Prostate gland (tissue), 2 donors: ENCODE measurements at regions of chr7 and their contacts with region 1.

Region 1: DNA sequence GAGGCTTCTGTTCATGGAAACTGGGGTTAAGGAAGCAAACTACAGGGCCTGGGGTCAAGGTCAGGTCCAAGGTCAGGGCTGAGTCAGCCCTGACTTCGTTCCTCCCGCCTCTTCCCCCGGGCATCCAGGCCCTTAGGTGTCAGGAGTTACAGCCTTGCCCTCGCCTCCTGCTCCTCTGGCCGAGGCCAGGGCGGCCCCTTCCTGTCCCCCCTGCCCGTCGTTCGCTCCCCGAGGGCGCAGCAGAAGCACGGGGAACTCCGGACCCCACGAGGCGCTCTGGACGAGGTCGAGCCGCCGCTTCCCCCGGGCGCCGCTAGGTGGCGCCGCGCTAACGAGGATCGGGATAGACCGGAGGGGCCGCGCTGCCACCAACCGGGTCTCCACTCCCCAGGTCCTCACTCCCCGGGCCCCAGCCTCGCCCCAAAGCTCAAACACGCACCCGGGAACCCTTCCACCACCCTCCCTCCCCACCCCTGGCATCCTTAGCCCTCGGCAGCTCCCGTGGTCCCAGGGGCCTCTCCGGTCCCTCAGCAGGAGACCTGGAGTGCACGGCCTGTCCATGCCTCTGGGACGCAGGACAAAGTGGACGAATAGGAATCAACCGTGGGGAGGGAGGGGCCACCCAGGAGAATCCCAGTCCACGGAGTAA is 59.2 kb upstream of the MYL10 start:
- DNase-seq: peak; percentile 58
- H3K4me3 ChIP-seq: no peak overlapping the region
- H3K27ac ChIP-seq: no peak overlapping the region
- H3K4me1 ChIP-seq: no peaks in the 10 kb centered on the region
- H3K27me3 ChIP-seq: no peaks in the 10 kb centered on the region
- CTCF ChIP-seq: peak; percentile 84 to 93 (median 90)
- POLR2A ChIP-seq: no peak

Region 2: GRCh38 chr7:101519324-101520023 is 168.8 kb before region 1 on chr7:
- intact Hi-C with region 1: no loop called
- DNase-seq: no peak
- H3K4me3 ChIP-seq: no peak overlapping the region
- H3K27ac ChIP-seq: no peak overlapping the region
- H3K4me1 ChIP-seq: peaks cover 4% of the 10 kb centered on the region
- H3K27me3 ChIP-seq: no peaks in the 10 kb centered on the region
- CTCF ChIP-seq: no peak
- POLR2A ChIP-seq: no peak

Region 3: GRCh38 chr7:101733713-101734475 is 45.6 kb after region 1 on chr7:
- intact Hi-C with region 1: no loop called
- DNase-seq: no peak
- H3K4me3 ChIP-seq: peak overlapping the region in 1 of 2 donors; percentile 16
- H3K27ac ChIP-seq: no peak overlapping the region
- H3K4me1 ChIP-seq: no peaks in the 10 kb centered on the region
- H3K27me3 ChIP-seq: no peaks in the 10 kb centered on the region
- CTCF ChIP-seq: no peak
- POLR2A ChIP-seq: no peak

Region 4: DNA sequence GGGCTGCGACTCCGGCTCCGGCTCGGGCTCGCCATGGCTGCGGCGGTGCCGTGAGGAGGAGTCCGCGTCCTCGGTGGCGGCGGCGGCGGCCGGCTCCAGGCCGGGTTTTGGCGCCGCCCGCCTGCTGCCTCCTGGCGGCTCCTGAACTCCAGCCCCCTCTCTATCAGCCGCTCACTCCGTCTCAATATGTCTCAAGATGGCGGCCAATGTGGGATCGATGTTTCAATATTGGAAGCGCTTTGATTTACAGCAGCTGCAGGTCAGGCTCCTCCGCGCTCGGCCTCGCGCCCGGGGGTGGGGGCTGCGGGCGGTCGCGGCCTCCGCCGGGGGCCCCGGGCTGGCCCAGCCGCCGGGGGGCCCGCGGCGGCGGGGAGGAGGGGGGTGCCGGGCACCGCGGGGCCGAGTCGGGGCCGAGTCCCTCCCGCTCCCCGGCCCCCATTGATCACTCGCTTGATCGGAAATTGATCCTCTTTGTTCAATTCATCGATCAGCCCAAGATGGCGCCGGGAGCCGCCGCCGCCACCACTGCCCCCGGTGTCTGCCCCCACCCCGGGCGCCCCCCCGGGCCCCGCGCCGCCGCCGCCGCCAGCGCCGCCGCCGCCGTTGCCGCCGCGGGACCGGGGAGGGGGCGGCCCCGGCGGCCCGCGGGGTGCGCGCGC is 127.7 kb after region 1 on chr7:
- intact Hi-C with region 1: loop called (anchors 2 kb)
- DNase-seq: peak; percentile 57
- H3K4me3 ChIP-seq: peak overlapping the region; percentile 63 to 68
- H3K27ac ChIP-seq: peak overlapping the region; percentile 79 to 83
- H3K4me1 ChIP-seq: no peaks in the 10 kb centered on the region
- H3K27me3 ChIP-seq: no peaks in the 10 kb centered on the region
- CTCF ChIP-seq: peak in 1 of 4 experiments; percentile 32
- POLR2A ChIP-seq: no peak

Region 5: GRCh38 chr7:102125127-102125561 is 436.8 kb after region 1 on chr7:
- intact Hi-C with region 1: loop called (anchors 5 kb)
- DNase-seq: no peak
- H3K4me3 ChIP-seq: no peak overlapping the region
- H3K27ac ChIP-seq: no peak overlapping the region
- H3K4me1 ChIP-seq: no peaks in the 10 kb centered on the region
- H3K27me3 ChIP-seq: no peaks in the 10 kb centered on the region
- CTCF ChIP-seq: no peak
- POLR2A ChIP-seq: no peak

Region 6: DNA sequence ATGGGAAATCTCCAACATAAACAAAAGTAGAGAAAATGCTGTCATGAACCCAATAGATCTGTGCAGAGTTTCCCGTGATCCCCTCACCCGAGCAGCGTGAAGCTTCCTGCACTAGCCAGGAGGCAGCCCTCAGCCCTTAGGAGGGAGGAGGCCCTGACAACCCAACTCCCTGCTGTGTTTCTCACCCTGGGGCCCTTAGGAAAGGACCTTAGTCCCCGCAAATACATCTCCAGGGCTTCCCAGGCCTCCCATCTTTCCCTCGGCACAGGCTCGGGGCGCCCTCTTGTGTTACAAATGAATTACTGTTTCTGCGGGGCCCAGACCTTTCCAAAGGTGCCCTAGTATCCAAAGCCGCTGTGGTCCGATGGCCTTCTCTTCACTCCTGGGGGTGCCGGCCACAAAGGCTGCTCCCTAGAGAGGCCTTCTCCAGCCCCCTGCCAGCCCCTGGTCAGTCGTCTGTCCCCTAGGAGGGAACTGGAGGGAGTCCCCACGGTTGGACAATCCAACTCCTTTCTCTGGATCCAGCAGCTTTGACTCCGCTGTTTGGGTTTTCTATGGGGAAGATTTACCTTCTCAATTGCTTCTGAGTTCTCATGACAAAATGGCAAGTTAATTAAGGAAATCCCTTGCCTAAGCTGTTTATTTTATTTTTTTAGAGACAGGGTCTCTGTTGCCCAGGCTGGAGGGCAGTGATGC is 548.4 kb after region 1 on chr7:
- intact Hi-C with region 1: loop called (anchors 2 kb)
- DNase-seq: peak; percentile 49
- H3K4me3 ChIP-seq: no peak overlapping the region
- H3K27ac ChIP-seq: no peak overlapping the region
- H3K4me1 ChIP-seq: no peaks in the 10 kb centered on the region
- H3K27me3 ChIP-seq: no peaks in the 10 kb centered on the region
- CTCF ChIP-seq: peak; percentile 53 to 82 (median 80)
- POLR2A ChIP-seq: no peak

Region 7: GRCh38 chr7:102272075-102272917 is 584.0 kb after region 1 on chr7:
- intact Hi-C with region 1: loop called (anchors 2 kb)
- DNase-seq: peak; percentile 70
- H3K4me3 ChIP-seq: no peak overlapping the region
- H3K27ac ChIP-seq: no peak overlapping the region
- H3K4me1 ChIP-seq: no peaks in the 10 kb centered on the region
- H3K27me3 ChIP-seq: no peaks in the 10 kb centered on the region
- CTCF ChIP-seq: peak; percentile 81 to 95 (median 91)
- POLR2A ChIP-seq: no peak